Activated CD8-positive, alpha-beta T cell treated with anti-CD3 and anti-CD28 coated beads for 36 hours (primary cell): ENCODE measurements at regions of chr1 and their contacts with region 1.

Region 1: GRCh38 chr1:163315773-163316374 is 5.9 kb upstream of the NUF2 start:
- DNase-seq: peak; percentile 50
- ATAC-seq: no peak
- H3K4me3 Mint-ChIP-seq: no peak overlapping the region
- H3K27ac Mint-ChIP-seq: no peak overlapping the region
- H3K4me1 Mint-ChIP-seq: peaks cover 5% of the 10 kb centered on the region
- H3K27me3 Mint-ChIP-seq: no peaks in the 10 kb centered on the region
- CTCF ChIP-seq: peak; percentile 78

Region 2: DNA sequence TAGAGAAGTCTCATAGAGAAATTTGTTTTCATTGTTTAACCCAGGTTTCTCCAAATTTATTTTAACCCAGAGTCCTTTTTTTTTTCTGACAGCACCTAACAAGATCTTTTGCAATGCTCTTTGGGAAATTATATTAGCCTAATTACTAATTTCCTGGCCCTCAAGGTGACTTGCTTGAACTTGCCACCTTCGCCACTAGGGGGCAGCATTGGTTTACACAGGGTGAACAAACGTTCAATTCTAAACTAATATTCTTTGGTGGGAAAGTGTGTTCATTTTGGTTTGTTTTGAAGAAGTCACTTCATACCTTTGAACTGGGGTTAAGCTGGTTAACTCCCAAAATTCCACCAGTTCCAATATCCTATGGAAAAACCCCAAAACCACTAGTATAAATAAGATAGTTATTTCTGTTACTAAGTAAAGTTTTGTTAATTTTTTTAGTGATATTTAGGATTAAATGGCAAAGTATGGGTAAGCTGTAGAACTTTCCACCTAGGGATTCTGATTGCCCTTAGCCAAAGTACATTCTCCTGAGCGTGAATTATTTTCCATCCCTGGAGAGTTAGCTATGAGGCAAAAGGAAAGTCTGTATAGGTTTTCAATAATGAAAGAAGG is 467.9 kb before region 1 on chr1:
- CTCF ChIA-PET with region 1: interaction called, 32 read pairs
- POLR2A ChIA-PET with region 1: no interaction called
- intact Hi-C with region 1: loop called (anchors 10 kb)
- DNase-seq: peak; percentile 89
- ATAC-seq: peak; percentile 65
- H3K4me3 Mint-ChIP-seq: no peak overlapping the region
- H3K27ac Mint-ChIP-seq: no peak overlapping the region
- H3K4me1 Mint-ChIP-seq: no peaks in the 10 kb centered on the region
- H3K27me3 Mint-ChIP-seq: peaks cover 7% of the 10 kb centered on the region
- CTCF ChIP-seq: peak; percentile 87

Region 3: DNA sequence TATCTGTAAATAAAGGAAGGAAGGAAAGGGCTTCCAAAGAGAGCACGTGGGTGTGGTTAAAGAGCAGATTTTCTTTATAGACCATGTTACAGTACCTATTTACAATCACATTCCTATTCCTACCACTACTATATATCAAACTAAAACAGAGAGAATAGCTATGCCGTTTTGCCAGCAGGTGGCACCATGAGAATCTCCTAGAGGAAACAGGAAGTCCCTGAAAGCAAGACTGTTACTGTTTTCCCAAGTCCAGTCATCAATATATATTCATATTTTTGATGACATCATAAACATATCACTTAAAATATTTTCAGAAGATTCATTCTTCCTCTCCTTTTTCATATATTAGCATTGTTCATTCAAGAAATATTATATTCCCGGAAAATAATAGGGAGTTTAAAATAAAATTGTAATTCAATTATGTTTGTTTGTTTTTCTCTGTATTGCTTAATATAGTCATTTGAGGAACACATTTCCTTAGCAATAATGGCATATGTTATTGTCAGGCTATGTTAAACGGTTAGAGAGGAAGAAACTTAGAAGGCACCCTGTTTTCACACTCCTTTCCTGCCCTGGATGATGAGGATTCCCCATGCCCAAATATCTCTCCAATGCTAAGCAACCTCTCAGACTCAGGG is 461.5 kb before region 1 on chr1:
- CTCF ChIA-PET with region 1: interaction called, 32 read pairs
- POLR2A ChIA-PET with region 1: no interaction called
- intact Hi-C with region 1: loop called (anchors 10 kb)
- DNase-seq: peak; percentile 74
- ATAC-seq: peak; percentile 49
- H3K4me3 Mint-ChIP-seq: no peak overlapping the region
- H3K27ac Mint-ChIP-seq: no peak overlapping the region
- H3K4me1 Mint-ChIP-seq: no peaks in the 10 kb centered on the region
- H3K27me3 Mint-ChIP-seq: peaks cover 5% of the 10 kb centered on the region
- CTCF ChIP-seq: peak; percentile 70

Region 4: DNA sequence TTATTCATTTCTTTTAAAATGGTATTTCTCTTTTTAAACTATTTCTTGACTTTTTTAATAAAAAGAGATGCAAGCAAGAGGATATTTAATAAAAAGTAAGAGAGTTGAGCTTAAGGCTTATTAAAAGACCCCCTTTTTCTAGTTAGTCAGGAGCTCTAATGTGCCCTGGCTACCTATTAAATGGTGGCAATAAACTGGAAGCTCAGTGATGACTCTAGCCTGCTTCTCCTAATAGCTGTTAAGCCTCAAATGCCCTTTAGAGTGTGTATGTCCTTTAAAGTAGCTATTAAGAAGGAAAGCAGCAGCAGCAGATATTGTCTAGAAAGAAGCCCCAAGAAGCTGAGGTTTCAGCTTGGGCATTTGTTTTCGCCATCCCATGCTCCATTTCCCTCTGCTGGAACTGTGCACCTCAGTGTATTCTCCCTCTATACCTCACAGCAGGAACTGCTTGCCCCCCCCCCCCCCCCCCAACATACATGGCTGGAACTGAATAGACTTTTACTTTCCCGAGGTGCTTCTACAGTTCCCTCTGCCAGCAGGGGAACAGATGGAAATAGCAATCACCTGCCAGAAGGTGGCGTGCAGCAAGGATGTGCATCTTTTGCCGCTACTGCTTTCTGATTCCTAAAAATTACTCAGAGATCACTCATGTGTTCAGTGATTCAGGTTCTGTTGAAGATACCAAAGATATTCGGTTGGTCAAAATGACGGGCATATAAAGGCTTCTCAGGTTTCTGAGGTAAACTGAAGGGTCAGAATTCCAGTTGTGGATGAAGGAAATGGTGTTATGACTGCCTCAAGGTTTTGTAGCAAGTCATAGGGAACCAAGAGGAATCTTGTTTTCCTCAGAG is 244.2 kb before region 1 on chr1:
- CTCF ChIA-PET with region 1: interaction called, 17 read pairs
- POLR2A ChIA-PET with region 1: no interaction called
- intact Hi-C with region 1: no loop called
- DNase-seq: peak; percentile 63
- ATAC-seq: peak; percentile 39
- H3K4me3 Mint-ChIP-seq: no peak overlapping the region
- H3K27ac Mint-ChIP-seq: no peak overlapping the region
- H3K4me1 Mint-ChIP-seq: no peaks in the 10 kb centered on the region
- H3K27me3 Mint-ChIP-seq: peaks cover 29% of the 10 kb centered on the region
- CTCF ChIP-seq: peak; percentile 66

Region 5: GRCh38 chr1:163174524-163175437 is 141.1 kb before region 1 on chr1:
- CTCF ChIA-PET with region 1: interaction called, 9 read pairs
- POLR2A ChIA-PET with region 1: no interaction called
- intact Hi-C with region 1: loop called (anchors 10 kb)
- DNase-seq: peak; percentile 67
- ATAC-seq: no peak
- H3K4me3 Mint-ChIP-seq: no peak overlapping the region
- H3K27ac Mint-ChIP-seq: no peak overlapping the region
- H3K4me1 Mint-ChIP-seq: no peaks in the 10 kb centered on the region
- H3K27me3 Mint-ChIP-seq: peaks cover 3% of the 10 kb centered on the region
- CTCF ChIP-seq: peak; percentile 79